Transverse colon (tissue), 4 donors: ENCODE measurements at regions of chr14 and their contacts with region 1.

Region 1: DNA sequence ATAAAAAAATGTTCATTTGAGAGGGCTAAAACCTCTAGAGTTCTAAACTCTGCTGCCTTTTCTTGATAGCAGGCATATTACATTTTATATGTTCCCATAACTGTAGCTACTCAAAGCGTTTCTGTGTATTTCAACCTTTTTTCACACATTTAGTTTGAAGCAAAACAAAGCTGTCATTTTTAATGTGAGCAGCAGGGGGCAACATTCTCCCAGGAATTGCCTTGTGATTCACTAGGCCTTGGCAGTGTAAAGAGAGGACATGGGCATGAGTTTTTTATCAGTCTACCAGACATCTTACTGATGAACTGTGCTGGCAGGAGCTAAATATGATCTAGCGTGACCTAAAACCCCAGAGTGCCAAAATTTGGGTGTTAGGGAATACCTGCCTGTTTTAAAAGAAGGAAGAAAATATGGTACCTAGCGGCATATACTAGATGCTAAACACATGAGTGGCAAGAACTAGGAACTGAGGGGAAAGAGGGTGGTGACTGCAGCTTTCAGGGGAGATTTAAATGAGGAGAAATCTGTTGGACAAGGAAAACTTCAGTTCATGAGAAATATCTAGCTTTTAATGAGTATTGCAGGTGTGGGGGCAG is 65.3 kb downstream of the IFT43 start:
- DNase-seq: peak; percentile 40
- H3K4me3 ChIP-seq: no peak overlapping the region
- H3K27ac ChIP-seq: no peak overlapping the region
- H3K4me1 ChIP-seq: no peaks in the 10 kb centered on the region
- H3K27me3 ChIP-seq: no peaks in the 10 kb centered on the region
- CTCF ChIP-seq: peak; percentile 73 to 81 (median 77)
- EP300 ChIP-seq: no peak
- POLR2A ChIP-seq: no peak

Region 2: DNA sequence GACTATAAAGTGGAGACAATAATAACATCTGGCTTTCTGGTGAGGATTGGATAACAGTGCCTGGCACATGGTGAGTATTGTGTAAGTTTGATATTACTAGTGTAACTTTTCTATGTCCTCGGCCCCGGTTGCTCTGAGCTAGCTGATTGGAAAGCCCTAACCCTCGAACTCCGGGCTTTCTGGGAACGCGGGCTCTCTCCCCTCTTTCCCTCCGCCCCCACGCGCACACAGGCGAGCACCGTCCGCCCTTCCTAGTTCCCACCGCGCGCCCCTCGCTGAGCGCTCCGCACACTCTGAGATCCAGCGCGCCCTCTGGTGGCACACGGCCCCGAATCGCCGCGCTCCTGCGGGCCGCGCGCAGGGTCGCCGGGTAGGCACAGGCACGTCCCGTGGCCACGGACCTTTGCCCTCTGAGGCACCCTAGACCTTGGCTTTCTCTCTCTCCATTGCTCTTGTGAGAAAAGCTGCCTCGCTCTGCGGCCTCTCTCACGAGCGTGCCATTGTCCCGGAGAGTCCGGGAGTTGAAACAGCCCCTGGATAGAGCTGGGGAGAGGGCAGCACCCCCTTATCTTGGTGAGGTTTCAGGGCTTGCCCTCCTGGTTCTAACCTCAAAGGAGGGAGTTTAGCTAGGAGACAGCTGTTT is 301.9 kb after region 1 on chr14:
- in situ Hi-C with region 1: loop called (anchors 10 to 25 kb)
- intact Hi-C with region 1: loop called (anchors 2 kb)
- DNase-seq: peak; percentile 20
- H3K4me3 ChIP-seq: peak overlapping the region in 1 of 4 donors; percentile 28
- H3K27ac ChIP-seq: no peak overlapping the region
- H3K4me1 ChIP-seq: peaks cover 0 to 5% (median 2%) of the 10 kb centered on the region in 4 donors
- H3K27me3 ChIP-seq: peaks cover 15% of the 10 kb centered on the region
- CTCF ChIP-seq: peak; percentile 61 to 78 (median 69)
- EP300 ChIP-seq: no peak
- POLR2A ChIP-seq: no peak

Region 3: GRCh38 chr14:76386915-76387782 is 336.3 kb after region 1 on chr14:
- in situ Hi-C with region 1: loop called in 1 of 4 experiments (anchors 10 kb)
- intact Hi-C with region 1: no loop called
- DNase-seq: peak; percentile 62
- H3K4me3 ChIP-seq: no peak overlapping the region
- H3K27ac ChIP-seq: no peak overlapping the region
- H3K4me1 ChIP-seq: no peaks in the 10 kb centered on the region
- H3K27me3 ChIP-seq: peaks cover 53% of the 10 kb centered on the region
- CTCF ChIP-seq: peak; percentile 69 to 94 (median 87)
- EP300 ChIP-seq: no peak
- POLR2A ChIP-seq: no peak

Region 4: DNA sequence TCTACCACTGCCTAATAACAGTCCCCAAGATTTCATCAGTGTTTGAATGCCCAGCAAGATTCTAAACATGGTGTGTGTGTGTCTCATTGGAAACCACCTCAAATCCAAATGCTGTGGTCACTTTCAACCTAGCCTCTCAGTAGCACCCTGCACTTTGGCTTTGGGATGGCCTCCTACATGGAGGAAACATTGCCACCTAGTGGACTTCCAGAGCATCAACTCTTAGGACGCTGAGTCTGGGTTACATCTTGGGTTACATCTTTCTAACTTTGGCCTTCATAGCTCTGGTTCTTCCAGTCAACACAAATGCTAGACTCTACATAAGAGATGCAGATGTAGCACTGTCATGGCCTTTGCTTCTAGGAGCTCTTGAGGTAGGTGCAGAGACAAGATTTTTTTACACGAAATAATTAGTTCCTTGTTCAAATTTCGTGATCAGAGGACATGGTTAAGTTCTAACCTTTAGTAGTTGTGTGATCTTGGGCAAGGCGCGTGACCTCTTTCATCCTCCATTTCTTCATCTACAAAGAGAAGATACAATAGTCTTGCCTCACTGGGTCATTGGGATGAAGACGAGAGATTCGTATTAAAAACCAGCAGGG is 596.9 kb after region 1 on chr14:
- in situ Hi-C with region 1: loop called in 2 of 4 experiments (anchors 10 kb)
- intact Hi-C with region 1: no loop called
- DNase-seq: peak; percentile 10
- H3K4me3 ChIP-seq: no peak overlapping the region
- H3K27ac ChIP-seq: no peak overlapping the region
- H3K4me1 ChIP-seq: no peaks in the 10 kb centered on the region
- H3K27me3 ChIP-seq: no peaks in the 10 kb centered on the region
- CTCF ChIP-seq: peak; percentile 61 to 75 (median 72)
- EP300 ChIP-seq: no peak
- POLR2A ChIP-seq: no peak